WTC11 (cell line): ENCODE measurements at regions of chr4 and their contacts with region 1.

Region 1: DNA sequence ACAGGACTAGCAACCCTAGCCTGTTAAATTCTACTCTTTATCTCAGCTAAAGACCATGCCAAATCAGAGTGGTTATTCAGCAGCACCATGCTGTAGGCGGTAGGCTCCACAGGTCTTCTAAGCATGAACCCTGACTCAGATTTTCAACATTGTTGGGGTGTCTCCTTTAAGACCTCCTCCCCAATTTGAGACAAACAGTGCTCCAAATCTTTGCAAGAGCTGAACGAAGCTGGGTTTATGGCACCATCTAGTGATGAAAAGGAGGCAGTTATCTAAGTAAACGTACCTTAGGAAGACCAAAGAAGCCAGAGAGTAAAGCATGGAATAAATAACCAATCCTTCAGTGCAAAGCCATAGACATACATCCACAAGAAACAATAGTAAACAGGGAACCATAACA is 334.5 kb upstream of the SLC7A11 start:
- DNase-seq: no peak
- ATAC-seq: peak; percentile 93
- H3K4me3 Mint-ChIP-seq: no peak overlapping the region
- H3K27ac Mint-ChIP-seq: no peak overlapping the region
- H3K4me1 Mint-ChIP-seq: peaks cover 21% of the 10 kb centered on the region
- H3K27me3 Mint-ChIP-seq: no peaks in the 10 kb centered on the region
- CTCF ChIP-seq: no peak

Region 2: GRCh38 chr4:138555584-138555983 is 21.1 kb before region 1 on chr4:
- CTCF ChIA-PET with region 1: interaction called, 14 read pairs
- POLR2A ChIA-PET with region 1: no interaction called
- DNase-seq: peak; percentile 32
- ATAC-seq: peak; percentile 81
- H3K4me3 Mint-ChIP-seq: no peak overlapping the region
- H3K27ac Mint-ChIP-seq: no peak overlapping the region
- H3K4me1 Mint-ChIP-seq: peaks cover 11% of the 10 kb centered on the region
- H3K27me3 Mint-ChIP-seq: no peaks in the 10 kb centered on the region
- CTCF ChIP-seq: peak; percentile 33; the same call in 1 of the 2 replicates

Region 3: DNA sequence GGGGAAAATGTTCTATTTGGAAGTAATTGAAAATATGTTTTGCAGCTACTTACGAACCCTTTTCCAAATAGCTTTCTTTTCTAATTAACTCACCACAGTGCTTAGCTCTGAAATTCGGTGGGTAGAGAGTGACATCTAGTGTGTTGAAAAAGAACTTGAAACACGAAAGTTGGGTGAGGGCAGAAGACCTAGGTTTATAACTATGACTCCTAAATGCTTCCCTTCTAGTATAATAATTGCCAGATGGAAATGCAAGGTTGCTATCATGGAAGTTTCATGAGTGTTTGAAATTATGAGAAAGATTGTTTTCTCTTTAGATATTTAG is 361.6 kb after region 1 on chr4:
- CTCF ChIA-PET with region 1: interaction called, 16 read pairs
- POLR2A ChIA-PET with region 1: no interaction called
- DNase-seq: no peak
- ATAC-seq: peak; percentile 67
- H3K4me3 Mint-ChIP-seq: no peak overlapping the region
- H3K27ac Mint-ChIP-seq: no peak overlapping the region
- H3K4me1 Mint-ChIP-seq: peaks cover 55% of the 10 kb centered on the region
- H3K27me3 Mint-ChIP-seq: no peaks in the 10 kb centered on the region
- CTCF ChIP-seq: no peak